B cell (primary cell): ENCODE measurements at regions of chr1 and their contacts with region 1.

Region 1: DNA sequence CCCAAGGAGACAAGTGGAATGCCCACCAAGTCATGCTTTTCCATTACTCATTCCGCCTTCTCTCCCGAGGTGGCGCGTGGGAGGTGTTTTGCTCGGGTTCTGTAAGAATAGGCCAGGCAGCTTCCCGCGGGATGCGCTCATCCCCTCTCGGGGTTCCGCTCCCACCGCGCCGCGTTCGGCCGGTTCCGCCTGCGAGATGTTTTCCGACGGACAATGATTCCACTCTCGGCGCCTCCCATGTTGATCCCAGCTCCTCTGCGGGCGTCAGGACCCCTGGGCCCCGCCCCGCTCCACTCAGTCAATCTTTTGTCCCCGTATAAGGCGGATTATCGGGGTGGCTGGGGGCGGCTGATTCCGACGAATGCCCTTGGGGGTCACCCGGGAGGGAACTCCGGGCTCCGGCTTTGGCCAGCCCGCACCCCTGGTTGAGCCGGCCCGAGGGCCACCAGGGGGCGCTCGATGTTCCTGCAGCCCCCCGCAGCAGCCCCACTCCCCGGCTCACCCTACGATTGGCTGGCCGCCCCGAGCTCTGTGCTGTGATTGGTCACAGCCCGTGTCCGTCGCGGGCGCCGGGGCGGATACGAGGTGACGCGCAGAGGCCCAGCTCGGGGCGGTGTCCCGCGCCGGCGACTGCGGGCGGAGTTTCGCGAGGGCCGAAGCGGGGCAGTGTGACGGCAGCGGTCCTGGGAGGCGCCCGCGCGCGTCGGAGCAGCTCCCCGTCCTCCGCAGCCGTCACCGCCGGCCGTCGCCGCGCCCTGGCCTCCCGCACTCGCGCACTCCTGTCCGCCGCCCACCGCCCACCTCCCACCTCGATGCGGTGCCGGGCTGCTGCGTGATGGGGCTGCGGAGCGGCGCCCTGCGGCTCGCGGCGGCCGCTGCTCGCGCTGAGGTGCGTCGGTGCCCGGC is at the start of gene KIF1B:
- DNase-seq: peak; percentile 97
- ATAC-seq: peak; percentile 98
- H3K4me3 ChIP-seq: peak within 1 kb of the TSS; percentile 55 to 95 (median 77)
- H3K4me3 Mint-ChIP-seq: peak within 1 kb of the TSS; percentile 95
- H3K27ac ChIP-seq: peak within 1 kb of the TSS in 1 of 2 donors; percentile 33
- H3K27ac Mint-ChIP-seq: peak within 1 kb of the TSS; percentile 86
- H3K4me1 ChIP-seq: peaks cover 6 to 18% of the 10 kb centered on the region in 2 donors
- H3K4me1 Mint-ChIP-seq: peaks cover 24% of the 10 kb centered on the region
- H3K27me3 ChIP-seq: peaks cover 0 to 4% (median 0%) of the 10 kb centered on the region in 4 experiments
- H3K27me3 Mint-ChIP-seq: no peaks in the 10 kb centered on the region
- CTCF ChIP-seq: peak; percentile 99
- total RNA-seq, gene KIF1B: 16.4 and 17.1 TPM in 2 replicates

Region 2: DNA sequence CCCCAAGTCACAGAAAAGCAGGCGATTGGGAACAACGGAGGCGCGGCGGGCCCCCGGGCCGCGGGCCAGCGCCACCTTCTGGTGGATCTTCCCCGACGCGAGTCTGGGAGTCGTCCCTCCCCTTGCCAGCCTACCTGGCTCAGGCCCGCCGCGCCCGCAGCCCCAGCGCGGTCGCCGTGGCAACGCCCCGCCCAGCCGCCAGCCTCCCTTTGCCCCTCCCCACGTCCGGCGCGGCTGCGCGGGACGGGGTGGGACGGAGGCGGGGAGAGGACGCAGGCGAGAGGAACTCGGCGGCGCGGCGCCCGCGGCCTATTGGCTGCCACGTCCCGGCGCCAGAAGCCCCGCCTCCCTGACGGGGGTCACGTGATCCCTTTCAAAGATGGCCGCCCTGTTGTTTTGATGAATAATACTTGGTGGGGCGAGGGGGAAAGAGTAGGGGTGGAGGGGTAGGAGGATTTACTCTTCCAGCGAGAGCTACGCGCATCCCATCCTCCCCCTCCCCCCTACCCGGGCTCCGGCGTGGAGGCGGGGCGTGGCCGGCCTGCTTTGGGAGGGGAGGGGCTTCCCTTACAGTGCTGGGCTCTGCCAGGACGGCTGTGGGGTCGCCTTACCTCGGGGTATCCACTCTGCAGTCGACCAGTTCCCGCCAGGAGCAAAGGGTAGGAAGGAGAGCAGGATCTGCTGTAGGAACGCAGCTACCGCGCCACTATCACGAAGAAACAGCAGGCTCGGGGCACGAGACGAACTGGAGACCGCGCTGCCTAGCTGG is 177.4 kb before region 1 on chr1 and contains the start of gene UBE4B:
- CTCF ChIA-PET with region 1: no interaction called
- POLR2A ChIA-PET with region 1: no interaction called
- intact Hi-C with region 1: loop called (anchors 2 kb)
- DNase-seq: peak; percentile 99
- ATAC-seq: peak; percentile 94
- H3K4me3 ChIP-seq: peak within 1 kb of the TSS; percentile 70 to 93 (median 89)
- H3K4me3 Mint-ChIP-seq: peak within 1 kb of the TSS; percentile 99
- H3K27ac ChIP-seq: peak within 1 kb of the TSS; percentile 73 to 84
- H3K27ac Mint-ChIP-seq: peak within 1 kb of the TSS; percentile 96
- H3K4me1 ChIP-seq: peaks cover 18 to 19% of the 10 kb centered on the region in 2 donors
- H3K4me1 Mint-ChIP-seq: peaks cover 23% of the 10 kb centered on the region
- H3K27me3 ChIP-seq: no peaks in the 10 kb centered on the region
- H3K27me3 Mint-ChIP-seq: no peaks in the 10 kb centered on the region
- CTCF ChIP-seq: peak; percentile 89
- total RNA-seq, gene UBE4B: 57.5 and 59.0 TPM in 2 replicates

Region 3: GRCh38 chr1:10220200-10220599 is 10.0 kb after region 1 on chr1:
- CTCF ChIA-PET with region 1: interaction called, 15 read pairs
- POLR2A ChIA-PET with region 1: no interaction called
- intact Hi-C with region 1: no loop called
- DNase-seq: no peak
- ATAC-seq: no peak
- H3K4me3 ChIP-seq: no peak overlapping the region
- H3K4me3 Mint-ChIP-seq: no peak overlapping the region
- H3K27ac ChIP-seq: no peak overlapping the region
- H3K27ac Mint-ChIP-seq: no peak overlapping the region
- H3K4me1 ChIP-seq: peaks cover 0 to 4% of the 10 kb centered on the region in 2 donors
- H3K4me1 Mint-ChIP-seq: peaks cover 13% of the 10 kb centered on the region
- H3K27me3 ChIP-seq: no peaks in the 10 kb centered on the region
- H3K27me3 Mint-ChIP-seq: no peaks in the 10 kb centered on the region
- CTCF ChIP-seq: no peak

Region 4: DNA sequence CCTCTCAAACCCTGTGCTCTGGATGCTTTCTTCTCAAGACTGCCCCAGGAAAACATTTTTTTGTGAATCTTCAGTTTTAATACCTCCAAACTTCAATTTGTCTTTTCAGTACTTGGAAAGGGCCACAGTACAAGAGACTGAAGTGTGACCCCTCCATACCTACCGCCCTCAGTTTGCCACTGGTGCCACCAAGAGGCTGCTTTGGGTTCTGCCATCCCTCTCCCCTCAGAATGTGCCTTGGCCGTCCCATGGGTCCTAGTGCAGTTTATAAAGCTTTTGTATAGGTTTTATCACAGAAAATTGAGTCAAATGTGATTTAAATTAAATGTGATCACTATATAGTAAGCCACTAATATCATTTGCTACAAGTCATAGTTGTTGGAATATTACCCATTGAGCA is 127.9 kb after region 1 on chr1:
- CTCF ChIA-PET with region 1: interaction called, 6 read pairs
- POLR2A ChIA-PET with region 1: no interaction called
- intact Hi-C with region 1: loop called (anchors 10 kb)
- DNase-seq: peak; percentile 16
- ATAC-seq: peak; percentile 58
- H3K4me3 ChIP-seq: no peak overlapping the region
- H3K4me3 Mint-ChIP-seq: no peak overlapping the region
- H3K27ac ChIP-seq: no peak overlapping the region
- H3K27ac Mint-ChIP-seq: no peak overlapping the region
- H3K4me1 ChIP-seq: no peaks in the 10 kb centered on the region
- H3K4me1 Mint-ChIP-seq: no peaks in the 10 kb centered on the region
- H3K27me3 ChIP-seq: no peaks in the 10 kb centered on the region
- H3K27me3 Mint-ChIP-seq: no peaks in the 10 kb centered on the region
- CTCF ChIP-seq: peak; percentile 38

Region 5: DNA sequence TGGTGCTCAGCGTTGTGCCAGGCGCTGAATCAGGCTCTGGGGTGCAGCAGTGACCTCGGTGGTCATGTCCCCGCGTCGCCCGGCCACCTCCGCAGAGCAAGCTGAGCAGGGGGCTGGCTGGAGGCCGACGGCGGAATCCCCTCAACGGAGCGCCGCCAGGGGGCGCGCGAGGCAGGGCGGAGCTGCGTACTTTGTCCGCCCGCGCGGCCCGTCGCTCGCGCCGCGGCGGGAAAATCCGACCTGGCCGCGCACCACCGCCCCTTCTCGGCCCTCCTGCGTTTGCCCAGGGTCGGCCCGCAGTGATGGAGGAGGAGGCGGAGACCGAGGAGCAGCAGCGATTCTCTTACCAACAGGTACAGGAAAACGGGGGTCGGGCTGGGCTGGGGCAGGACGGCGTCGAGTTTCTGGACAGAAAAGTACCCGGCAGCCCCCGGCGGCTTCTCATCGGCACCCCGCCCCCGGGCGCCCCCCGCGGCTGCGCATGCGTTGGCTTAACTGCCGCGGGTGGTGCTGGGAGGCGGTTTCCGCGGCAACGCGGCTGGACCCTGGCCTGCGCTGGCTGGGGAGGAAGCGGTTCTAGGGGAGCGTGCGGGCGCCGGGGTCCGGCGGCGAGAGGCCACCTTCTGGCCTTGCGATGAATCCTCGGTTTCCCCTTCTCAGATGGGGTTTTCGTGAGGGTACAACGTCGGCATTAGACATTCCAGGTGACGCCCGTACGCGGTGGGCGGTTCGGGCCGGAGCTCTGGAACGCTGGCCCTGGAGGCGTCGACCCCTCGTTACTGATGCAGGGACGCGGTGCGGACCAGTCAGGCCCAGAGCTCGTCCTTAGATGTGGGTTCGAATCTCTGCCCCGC is 220.3 kb after region 1 on chr1 and contains the start of gene CENPS:
- CTCF ChIA-PET with region 1: interaction called, 19 read pairs
- POLR2A ChIA-PET with region 1: interaction called, 7 read pairs
- intact Hi-C with region 1: no loop called
- DNase-seq: peak; percentile 96
- ATAC-seq: peak; percentile 84
- H3K4me3 ChIP-seq: peak within 1 kb of the TSS; percentile 42 to 98 (median 89)
- H3K4me3 Mint-ChIP-seq: peak within 1 kb of the TSS; percentile 96
- H3K27ac ChIP-seq: peak within 1 kb of the TSS; percentile 82 to 95
- H3K27ac Mint-ChIP-seq: peak within 1 kb of the TSS; percentile 99
- H3K4me1 ChIP-seq: peaks cover 11 to 30% of the 10 kb centered on the region in 2 donors
- H3K4me1 Mint-ChIP-seq: peaks cover 30% of the 10 kb centered on the region
- H3K27me3 ChIP-seq: no peaks in the 10 kb centered on the region
- H3K27me3 Mint-ChIP-seq: no peaks in the 10 kb centered on the region
- CTCF ChIP-seq: peak; percentile 97
- total RNA-seq, gene CENPS: 7.2 and 10.9 TPM in 2 replicates

Region 6: GRCh38 chr1:10472220-10473144 is 262.3 kb after region 1 on chr1 and contains the start of gene DFFA:
- CTCF ChIA-PET with region 1: interaction called, 3 read pairs
- POLR2A ChIA-PET with region 1: no interaction called
- intact Hi-C with region 1: loop called (anchors 2 kb)
- DNase-seq: peak; percentile 94
- ATAC-seq: peak; percentile 81
- H3K4me3 ChIP-seq: peak within 1 kb of the TSS; percentile 58 to 84 (median 80)
- H3K4me3 Mint-ChIP-seq: peak within 1 kb of the TSS; percentile 87
- H3K27ac ChIP-seq: peak within 1 kb of the TSS; percentile 38 to 74
- H3K27ac Mint-ChIP-seq: peak within 1 kb of the TSS; percentile 88
- H3K4me1 ChIP-seq: peaks cover 34 to 44% of the 10 kb centered on the region in 2 donors
- H3K4me1 Mint-ChIP-seq: peaks cover 46% of the 10 kb centered on the region
- H3K27me3 ChIP-seq: no peaks in the 10 kb centered on the region
- H3K27me3 Mint-ChIP-seq: no peaks in the 10 kb centered on the region
- CTCF ChIP-seq: no peak
- total RNA-seq, gene DFFA: 28.2 and 30.7 TPM in 2 replicates